H1 (cell line): ENCODE measurements at regions of chr11 and their contacts with region 1.

Region 1: DNA sequence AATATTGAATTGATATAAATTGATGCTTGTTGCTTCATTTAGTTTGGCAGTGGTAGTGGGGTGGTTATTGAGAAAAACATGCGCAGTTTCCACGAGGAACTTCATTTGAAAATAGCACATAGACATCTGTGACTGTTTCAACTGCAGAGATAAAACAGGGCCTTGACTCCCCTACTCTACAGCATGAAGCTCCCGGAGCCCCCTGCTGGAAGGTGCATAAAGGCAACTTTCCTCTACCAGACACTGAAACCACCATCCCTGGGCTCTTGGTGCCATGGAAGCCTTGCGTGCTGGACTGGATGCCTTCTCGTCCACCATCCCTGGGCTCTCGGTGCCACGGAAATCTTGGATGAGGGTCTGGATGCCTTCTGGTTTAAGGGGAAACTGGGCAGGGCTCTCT is 195.9 kb downstream of the CSNK2A3 start:
- DNase-seq: no peak
- H3K4me3 ChIP-seq: no peak overlapping the region
- H3K27ac ChIP-seq: no peak overlapping the region
- H3K4me1 ChIP-seq: peaks cover 0 to 2% (median 0%) of the 10 kb centered on the region in 4 experiments; a peak in 2 of 7 replicates
- H3K27me3 ChIP-seq: no peaks in the 10 kb centered on the region
- CTCF ChIP-seq: peak; percentile 51 to 64 (median 60)
- EP300 ChIP-seq: no peak
- POLR2A ChIP-seq: no peak
- RAD21 ChIP-seq: peak; percentile 45 to 56

Region 2: GRCh38 chr11:11095831-11096723 is 61.1 kb before region 1 on chr11:
- CTCF ChIA-PET with region 1: interaction called, 13 read pairs
- POLR2A ChIA-PET with region 1: no interaction called
- DNase-seq: no peak
- H3K4me3 ChIP-seq: no peak overlapping the region
- H3K27ac ChIP-seq: no peak overlapping the region
- H3K4me1 ChIP-seq: peaks cover 0 to 4% (median 2%) of the 10 kb centered on the region in 4 experiments; a peak in 2 of 7 replicates
- H3K27me3 ChIP-seq: no peaks in the 10 kb centered on the region
- CTCF ChIP-seq: no peak
- EP300 ChIP-seq: no peak
- POLR2A ChIP-seq: no peak
- RAD21 ChIP-seq: no peak

Region 3: GRCh38 chr11:11141065-11141464 is 16.1 kb before region 1 on chr11:
- CTCF ChIA-PET with region 1: interaction called, 38 read pairs
- POLR2A ChIA-PET with region 1: interaction called, 3 read pairs
- DNase-seq: no peak
- H3K4me3 ChIP-seq: no peak overlapping the region
- H3K27ac ChIP-seq: no peak overlapping the region
- H3K4me1 ChIP-seq: peaks cover 0 to 2% (median 0%) of the 10 kb centered on the region in 4 experiments; a peak in 1 of 7 replicates
- H3K27me3 ChIP-seq: no peaks in the 10 kb centered on the region
- CTCF ChIP-seq: no peak
- EP300 ChIP-seq: no peak
- POLR2A ChIP-seq: no peak
- RAD21 ChIP-seq: no peak

Region 4: DNA sequence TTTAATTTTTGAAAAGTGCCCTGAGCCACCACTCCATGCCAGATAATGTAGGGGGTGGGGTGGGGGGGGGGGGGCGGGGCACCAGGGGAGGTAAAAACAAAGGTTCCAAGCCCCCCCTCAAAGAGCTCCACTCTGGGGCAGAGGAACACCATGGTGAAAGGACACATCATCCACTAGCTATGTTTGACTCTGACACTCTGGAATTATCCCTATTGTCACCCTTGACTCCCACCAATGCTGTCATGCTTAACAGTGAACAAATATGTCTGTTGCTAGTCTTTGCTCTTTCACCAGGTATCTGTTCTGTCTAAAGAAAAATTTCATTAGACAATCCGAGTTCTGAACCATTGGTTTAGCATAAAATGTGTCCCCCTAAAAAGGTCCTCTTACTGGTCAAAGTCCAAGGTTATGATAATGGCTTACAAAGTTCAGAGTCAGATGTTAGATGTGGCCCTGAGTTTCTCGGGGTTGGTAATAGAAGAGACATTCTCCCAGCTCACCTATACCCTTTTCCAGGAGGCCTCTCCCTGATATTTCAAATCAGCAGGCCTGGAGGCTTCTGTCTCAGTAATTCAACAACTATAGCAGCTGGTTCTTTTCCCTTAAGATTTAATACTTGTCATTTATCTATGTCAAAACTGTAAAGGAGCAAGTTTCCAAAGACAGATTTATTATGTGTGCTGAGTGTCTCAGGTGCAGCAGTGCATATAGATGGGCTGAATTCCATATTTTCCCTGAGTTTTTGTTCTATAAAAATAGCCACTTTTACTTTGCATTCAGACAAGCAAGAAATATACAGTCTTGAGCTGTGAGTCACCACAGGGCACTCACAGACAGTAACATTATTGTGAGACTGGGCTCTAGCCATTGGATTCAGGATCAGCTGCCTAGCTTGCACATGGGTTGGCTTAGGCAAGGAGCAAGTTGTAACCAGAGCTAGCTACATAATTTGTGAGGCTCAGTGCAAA is 21.8 kb after region 1 on chr11:
- CTCF ChIA-PET with region 1: interaction called, 36 read pairs
- POLR2A ChIA-PET with region 1: interaction called, 4 read pairs
- DNase-seq: no peak
- H3K4me3 ChIP-seq: no peak overlapping the region
- H3K27ac ChIP-seq: no peak overlapping the region
- H3K4me1 ChIP-seq: 0 out of 7 replicates have a peak, but pooled peaks cover 0 to 3% (median 0%) of the 10 kb centered on the region in 4 experiments
- H3K27me3 ChIP-seq: no peaks in the 10 kb centered on the region
- CTCF ChIP-seq: no peak
- EP300 ChIP-seq: no peak
- POLR2A ChIP-seq: no peak
- RAD21 ChIP-seq: no peak

Region 5: DNA sequence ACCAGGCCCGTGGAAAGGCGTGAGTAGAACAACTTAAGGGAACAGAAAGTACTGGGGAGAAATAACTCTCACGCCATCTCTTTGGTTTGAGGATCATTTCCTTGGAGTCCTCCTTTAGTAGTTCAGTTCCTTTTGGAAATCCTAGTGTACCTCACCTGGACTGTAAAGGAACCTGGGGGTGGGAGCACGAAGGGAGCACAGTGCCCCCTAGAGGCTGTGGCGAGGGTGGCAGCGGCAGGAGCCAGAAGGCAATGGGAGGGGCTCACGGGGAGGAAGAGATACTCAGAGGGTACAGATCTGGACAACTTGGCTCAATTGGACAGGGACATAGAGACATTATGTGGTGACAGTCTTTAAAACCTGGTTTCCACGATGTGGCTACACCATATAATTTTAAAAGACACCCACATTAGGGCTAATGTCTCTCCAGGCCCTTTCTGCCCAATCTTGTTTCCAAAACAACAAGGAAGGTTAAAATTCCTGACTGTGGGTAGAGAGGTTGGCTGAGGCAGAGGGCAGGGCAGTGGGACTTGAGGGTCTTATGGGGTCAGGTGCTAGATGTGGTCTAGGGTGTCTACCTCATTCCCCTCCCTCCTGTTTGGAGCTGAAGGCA is 108.9 kb after region 1 on chr11:
- CTCF ChIA-PET with region 1: interaction called, 13 read pairs
- POLR2A ChIA-PET with region 1: no interaction called
- DNase-seq: peak in 1 of 2 experiments; percentile 94
- H3K4me3 ChIP-seq: no peak overlapping the region
- H3K27ac ChIP-seq: no peak overlapping the region
- H3K4me1 ChIP-seq: peaks cover 0 to 7% (median under 1%) of the 10 kb centered on the region in 4 experiments; a peak in 3 of 7 replicates
- H3K27me3 ChIP-seq: no peaks in the 10 kb centered on the region
- CTCF ChIP-seq: peak; percentile 90 to 98 (median 95)
- EP300 ChIP-seq: no peak
- POLR2A ChIP-seq: no peak
- RAD21 ChIP-seq: peak; percentile 86 to 92